ENCODE measurements at regions of chr1 and their contacts with region 1.

Region 1: GRCh38 chr1:53326088-53326597 is 1.7 kb downstream of the LRP8 start:
- DNase-seq: peak; percentile 92
- ATAC-seq: peak; percentile 88
- H3K4me3 Mint-ChIP-seq: peak overlapping the region; percentile 93
- H3K27ac Mint-ChIP-seq: peak overlapping the region; percentile 92
- H3K4me1 Mint-ChIP-seq: peaks cover 19% of the 10 kb centered on the region
- H3K27me3 Mint-ChIP-seq: no peaks in the 10 kb centered on the region
- CTCF ChIP-seq: no peak

Region 2: GRCh38 chr1:52726265-52727113 is 599.7 kb before region 1 on chr1 and contains the start of gene ZYG11B:
- CTCF ChIA-PET with region 1: no interaction called
- POLR2A ChIA-PET with region 1: no interaction called
- intact Hi-C with region 1: loop called (anchors 2 kb)
- DNase-seq: peak; percentile 90
- ATAC-seq: peak; percentile 94
- H3K4me3 Mint-ChIP-seq: peak within 1 kb of the TSS; percentile 91
- H3K27ac Mint-ChIP-seq: peak within 1 kb of the TSS; percentile 85
- H3K4me1 Mint-ChIP-seq: peaks cover 35% of the 10 kb centered on the region
- H3K27me3 Mint-ChIP-seq: no peaks in the 10 kb centered on the region
- CTCF ChIP-seq: no peak
- total RNA-seq, gene ZYG11B: 14.9 and 17.3 TPM in 2 replicates

Region 3: DNA sequence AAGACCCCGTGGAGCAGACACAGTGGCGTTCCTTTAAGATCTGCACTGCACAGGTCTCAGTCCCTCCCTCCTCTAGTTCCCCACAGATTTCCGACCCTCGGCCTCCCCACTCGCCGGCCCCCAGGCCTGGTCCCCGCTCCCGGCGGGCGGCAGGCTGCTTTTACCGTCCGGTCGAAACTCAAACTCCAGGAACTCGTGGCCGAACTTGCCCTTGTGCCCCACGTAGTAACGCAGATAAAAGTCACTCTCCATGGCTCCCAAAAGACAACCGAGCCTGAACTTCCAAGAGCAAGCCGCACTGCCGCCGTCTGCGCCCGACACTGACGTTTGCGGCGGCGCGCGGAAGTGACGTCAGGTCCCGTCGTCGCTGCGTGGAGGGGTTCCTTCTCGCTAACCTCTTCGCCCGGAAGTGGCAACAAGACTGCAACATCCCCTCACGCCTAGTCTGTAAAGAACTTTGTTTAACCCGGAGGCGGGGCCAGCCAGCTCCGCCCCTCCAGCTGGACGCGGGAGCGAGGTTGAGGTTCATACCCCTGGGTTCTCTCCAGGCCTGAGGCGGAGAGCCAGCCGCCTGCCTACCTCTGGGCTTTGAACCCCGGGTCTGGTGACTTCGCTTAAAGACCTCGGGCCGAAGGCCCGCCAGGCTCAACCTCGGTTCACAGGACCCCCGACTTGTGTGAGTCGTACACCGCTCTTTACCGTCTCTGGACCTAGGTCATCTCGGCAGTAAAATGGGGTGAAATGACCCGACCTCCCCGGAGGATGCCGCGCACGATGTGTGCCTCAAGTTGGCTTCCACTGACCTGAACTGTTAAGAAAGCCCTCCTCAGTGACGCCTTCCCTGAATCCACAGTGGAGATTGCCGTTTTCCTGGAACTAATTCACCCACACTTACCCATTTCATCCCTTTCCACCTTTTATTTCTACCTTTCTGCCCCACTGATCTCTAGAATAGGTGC is 87.7 kb before region 1 on chr1 and contains the start of gene MAGOH:
- CTCF ChIA-PET with region 1: no interaction called
- POLR2A ChIA-PET with region 1: interaction called, 4 read pairs
- intact Hi-C with region 1: loop called (anchors 1 kb)
- DNase-seq: peak; percentile 93
- ATAC-seq: peak; percentile 100
- H3K4me3 Mint-ChIP-seq: peak within 1 kb of the TSS; percentile 97
- H3K27ac Mint-ChIP-seq: peak within 1 kb of the TSS; percentile 91
- H3K4me1 Mint-ChIP-seq: peaks cover 32% of the 10 kb centered on the region
- H3K27me3 Mint-ChIP-seq: no peaks in the 10 kb centered on the region
- CTCF ChIP-seq: no peak
- total RNA-seq, gene MAGOH: 56.6 and 65.0 TPM in 2 replicates

Region 4: GRCh38 chr1:53344891-53345838 is 19.0 kb after region 1 on chr1:
- CTCF ChIA-PET with region 1: no interaction called
- POLR2A ChIA-PET with region 1: interaction called, 7 read pairs
- intact Hi-C with region 1: loop called (anchors 2 kb)
- DNase-seq: peak; percentile 11
- ATAC-seq: peak; percentile 92
- H3K4me3 Mint-ChIP-seq: no peak overlapping the region
- H3K27ac Mint-ChIP-seq: peak overlapping the region; percentile 15
- H3K4me1 Mint-ChIP-seq: peaks cover 10% of the 10 kb centered on the region
- H3K27me3 Mint-ChIP-seq: no peaks in the 10 kb centered on the region
- CTCF ChIP-seq: no peak

Region 5: DNA sequence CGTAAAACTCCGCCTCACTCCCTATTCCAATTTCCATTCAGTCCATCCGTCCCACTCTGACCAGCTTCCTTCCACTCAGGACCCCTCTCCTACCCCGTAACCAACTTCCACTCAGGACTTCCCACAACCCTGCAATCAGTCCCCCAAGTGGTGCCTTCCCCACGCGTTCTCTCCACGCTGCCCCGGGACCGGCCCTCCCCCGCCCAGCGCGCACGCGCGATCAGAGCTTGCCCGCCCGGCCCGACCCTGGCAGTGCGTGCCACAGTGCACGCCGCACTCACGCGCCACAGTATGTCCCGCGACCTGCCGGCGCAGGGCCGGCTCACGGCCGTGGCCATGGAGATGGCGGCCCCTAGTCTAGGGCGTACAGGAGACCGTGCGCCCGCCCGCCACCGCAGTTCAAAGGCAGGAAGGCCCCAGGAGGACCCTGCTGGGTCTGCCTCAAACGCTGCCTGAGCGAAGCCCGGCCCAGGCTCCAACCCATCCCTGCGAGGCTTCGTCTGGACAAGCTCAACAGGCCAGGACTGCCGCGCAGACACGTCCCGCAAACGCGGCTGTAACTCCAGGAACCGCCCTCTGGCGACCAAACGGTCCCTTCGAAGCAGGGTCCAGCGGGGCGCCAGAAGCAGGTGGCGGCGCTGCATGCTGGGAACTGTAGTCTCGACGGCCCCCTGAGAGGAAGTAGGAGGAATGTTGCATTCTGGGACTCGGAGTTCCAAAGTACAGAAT is 511.9 kb after region 1 on chr1 and contains the start of gene NDC1:
- CTCF ChIA-PET with region 1: no interaction called
- POLR2A ChIA-PET with region 1: no interaction called
- intact Hi-C with region 1: loop called (anchors 1 kb)
- DNase-seq: peak; percentile 86
- ATAC-seq: peak; percentile 89
- H3K4me3 Mint-ChIP-seq: peak within 1 kb of the TSS; percentile 94
- H3K27ac Mint-ChIP-seq: peak within 1 kb of the TSS; percentile 98
- H3K4me1 Mint-ChIP-seq: peaks cover 33% of the 10 kb centered on the region
- H3K27me3 Mint-ChIP-seq: no peaks in the 10 kb centered on the region
- CTCF ChIP-seq: no peak
- total RNA-seq, gene NDC1: 10.6 and 14.0 TPM in 2 replicates

Region 6: GRCh38 chr1:54715493-54716298 is 1389.6 kb after region 1 on chr1 and contains the start of gene TTC4:
- CTCF ChIA-PET with region 1: no interaction called
- POLR2A ChIA-PET with region 1: no interaction called
- intact Hi-C with region 1: loop called (anchors 5 kb)
- DNase-seq: peak; percentile 88
- ATAC-seq: peak; percentile 98
- H3K4me3 Mint-ChIP-seq: peak within 1 kb of the TSS; percentile 94
- H3K27ac Mint-ChIP-seq: peak within 1 kb of the TSS; percentile 83
- H3K4me1 Mint-ChIP-seq: peaks cover 30% of the 10 kb centered on the region
- H3K27me3 Mint-ChIP-seq: no peaks in the 10 kb centered on the region
- CTCF ChIP-seq: no peak
- total RNA-seq, gene TTC4: 30.8 and 31.5 TPM in 2 replicates

Measured in activated B cell treated with CpG ODN at 0.5 μM for 24 hours (primary cell).